IMR-90 (cell line): ENCODE measurements at regions of chr9 and their contacts with region 1.

Region 1: GRCh38 chr9:31119882-31120454 is 1264.5 kb upstream of the ACO1 start:
- DNase-seq: no peak
- ATAC-seq: no peak
- H3K4me3 ChIP-seq: no peak overlapping the region
- H3K27ac ChIP-seq: no peak overlapping the region
- H3K4me1 ChIP-seq: no peaks in the 10 kb centered on the region
- H3K27me3 ChIP-seq: no peaks in the 10 kb centered on the region
- CTCF ChIP-seq: peak; percentile 40
- POLR2A ChIP-seq: no peak
- RAD21 ChIP-seq: peak; percentile 51

Region 2: GRCh38 chr9:30723656-30724055 is 396.3 kb before region 1 on chr9:
- CTCF ChIA-PET with region 1: no interaction called
- POLR2A ChIA-PET with region 1: no interaction called
- dilution Hi-C with region 1: no loop called
- in situ Hi-C with region 1: no loop called
- intact Hi-C with region 1: no loop called
- DNase-seq: no peak
- ATAC-seq: no peak
- H3K4me3 ChIP-seq: no peak overlapping the region
- H3K27ac ChIP-seq: no peak overlapping the region
- H3K4me1 ChIP-seq: no peaks in the 10 kb centered on the region
- H3K27me3 ChIP-seq: no peaks in the 10 kb centered on the region
- CTCF ChIP-seq: no peak
- POLR2A ChIP-seq: no peak
- RAD21 ChIP-seq: no peak

Region 3: GRCh38 chr9:31045789-31046188 is 74.2 kb before region 1 on chr9:
- CTCF ChIA-PET with region 1: no interaction called
- POLR2A ChIA-PET with region 1: no interaction called
- dilution Hi-C with region 1: no loop called
- in situ Hi-C with region 1: no loop called
- intact Hi-C with region 1: no loop called
- DNase-seq: no peak
- ATAC-seq: no peak
- H3K4me3 ChIP-seq: no peak overlapping the region
- H3K27ac ChIP-seq: no peak overlapping the region
- H3K4me1 ChIP-seq: no peaks in the 10 kb centered on the region
- H3K27me3 ChIP-seq: no peaks in the 10 kb centered on the region
- CTCF ChIP-seq: no peak
- POLR2A ChIP-seq: no peak
- RAD21 ChIP-seq: no peak

Region 4: DNA sequence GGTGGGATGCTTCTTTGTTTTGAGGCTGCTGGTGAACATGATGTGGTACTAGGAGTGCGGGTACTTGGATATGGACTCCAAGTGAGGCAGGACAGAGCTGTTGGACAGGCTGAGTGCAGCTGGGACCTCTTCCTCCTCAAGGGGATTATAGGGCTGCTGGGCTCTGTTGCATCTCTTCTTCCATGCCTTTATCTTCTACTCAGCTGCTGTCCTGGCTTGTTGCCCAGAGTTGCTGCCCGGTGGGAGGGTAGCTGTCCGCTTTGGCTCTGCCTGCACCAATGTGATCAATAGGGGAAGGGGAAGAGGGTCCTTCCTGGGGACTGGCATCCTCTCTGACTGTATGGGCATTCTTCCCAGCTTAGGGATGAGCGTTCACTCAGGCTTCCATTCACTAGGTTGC is 46.5 kb after region 1 on chr9:
- CTCF ChIA-PET with region 1: no interaction called
- POLR2A ChIA-PET with region 1: no interaction called
- dilution Hi-C with region 1: no loop called
- in situ Hi-C with region 1: no loop called
- intact Hi-C with region 1: no loop called
- DNase-seq: no peak
- ATAC-seq: no peak
- H3K4me3 ChIP-seq: no peak overlapping the region
- H3K27ac ChIP-seq: no peak overlapping the region
- H3K4me1 ChIP-seq: no peaks in the 10 kb centered on the region
- H3K27me3 ChIP-seq: no peaks in the 10 kb centered on the region
- CTCF ChIP-seq: no peak
- POLR2A ChIP-seq: no peak
- RAD21 ChIP-seq: no peak

Region 5: GRCh38 chr9:31590091-31590490 is 470.1 kb after region 1 on chr9:
- CTCF ChIA-PET with region 1: no interaction called
- POLR2A ChIA-PET with region 1: no interaction called
- dilution Hi-C with region 1: no loop called
- in situ Hi-C with region 1: no loop called
- intact Hi-C with region 1: no loop called
- DNase-seq: no peak
- ATAC-seq: no peak
- H3K4me3 ChIP-seq: no peak overlapping the region
- H3K27ac ChIP-seq: no peak overlapping the region
- H3K4me1 ChIP-seq: no peaks in the 10 kb centered on the region
- H3K27me3 ChIP-seq: no peaks in the 10 kb centered on the region
- CTCF ChIP-seq: no peak
- POLR2A ChIP-seq: no peak
- RAD21 ChIP-seq: no peak

Region 6: DNA sequence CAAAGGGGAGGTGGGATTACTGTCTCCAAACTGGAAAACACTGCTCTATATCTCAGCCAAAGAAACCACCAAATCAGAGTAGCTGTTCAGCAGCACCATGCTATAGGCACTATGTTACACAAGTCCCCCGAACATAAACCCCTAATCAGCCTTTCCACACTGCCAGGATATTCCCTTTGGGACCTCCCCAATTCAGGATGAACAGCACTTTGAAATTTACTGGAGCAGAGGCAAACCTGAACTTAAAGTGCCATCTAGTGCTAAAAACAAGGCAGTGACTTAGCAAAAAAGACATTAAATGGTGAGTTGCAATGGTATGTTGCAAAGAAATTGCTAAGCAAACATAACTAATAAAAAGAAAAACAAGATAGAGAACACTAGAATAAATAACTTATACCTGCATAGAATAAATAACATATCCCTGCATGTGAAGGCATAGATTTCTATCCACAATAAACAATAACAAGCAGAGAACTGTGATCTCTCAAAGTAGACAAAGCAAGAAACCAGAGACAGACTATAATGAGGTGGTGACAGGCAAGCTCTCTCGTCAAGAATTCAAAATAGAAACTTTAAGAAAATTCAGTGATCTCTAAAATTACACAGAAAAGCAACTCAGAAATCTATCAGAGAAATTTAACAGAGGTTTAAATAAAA is 680.1 kb after region 1 on chr9:
- CTCF ChIA-PET with region 1: no interaction called
- POLR2A ChIA-PET with region 1: no interaction called
- dilution Hi-C with region 1: no loop called
- in situ Hi-C with region 1: no loop called
- intact Hi-C with region 1: loop called (anchors 2 kb)
- DNase-seq: no peak
- ATAC-seq: no peak
- H3K4me3 ChIP-seq: no peak overlapping the region
- H3K27ac ChIP-seq: no peak overlapping the region
- H3K4me1 ChIP-seq: no peaks in the 10 kb centered on the region
- H3K27me3 ChIP-seq: no peaks in the 10 kb centered on the region
- CTCF ChIP-seq: peak; percentile 43
- POLR2A ChIP-seq: no peak
- RAD21 ChIP-seq: peak; percentile 66